ENCODE measurements at regions of chr10 and their contacts with region 1.

Region 1: DNA sequence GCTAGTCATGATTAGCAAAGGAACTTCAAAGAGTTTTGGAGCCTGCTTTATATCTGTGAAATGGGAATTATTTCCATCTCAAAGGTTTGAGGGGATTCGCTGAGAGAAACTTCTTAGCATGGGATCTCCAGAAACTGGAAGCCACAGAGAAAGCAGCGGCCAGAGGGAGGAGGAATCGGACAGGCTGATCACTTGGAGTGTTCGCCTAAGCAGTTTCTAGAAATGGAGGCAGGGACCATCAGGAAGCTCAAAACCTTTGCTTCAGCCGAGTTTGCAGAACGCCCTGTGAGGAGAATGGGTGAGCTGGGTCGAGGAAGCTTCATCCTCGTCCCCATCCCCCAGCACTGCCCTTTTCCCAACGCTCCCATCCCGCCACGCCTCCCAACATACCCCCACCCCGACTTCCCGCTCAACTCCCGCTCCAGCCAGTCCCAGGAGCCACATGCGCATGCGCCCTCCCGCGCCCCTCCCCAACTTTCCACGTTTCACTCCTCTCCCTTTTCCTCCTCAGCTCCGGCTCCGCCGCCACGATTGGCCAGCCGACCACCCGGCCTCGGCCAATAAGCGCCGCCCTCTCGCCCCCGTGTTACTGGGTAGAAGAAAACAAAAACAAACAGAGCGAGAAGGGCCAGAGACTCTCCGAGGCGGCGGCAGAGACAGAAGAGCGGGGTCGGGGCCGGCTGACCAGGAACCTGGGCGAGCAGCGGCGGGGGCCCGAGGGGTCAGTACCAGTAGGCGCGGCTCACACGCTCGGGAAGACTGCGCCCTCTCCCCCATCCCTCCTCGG is at the start of gene PDCD4:
- H3K4me3 Mint-ChIP-seq: peak within 1 kb of the TSS; percentile 86
- H3K27ac Mint-ChIP-seq: peak within 1 kb of the TSS; percentile 99
- H3K4me1 Mint-ChIP-seq: peaks cover 41% of the 10 kb centered on the region
- H3K27me3 Mint-ChIP-seq: no peaks in the 10 kb centered on the region

Region 2: GRCh38 chr10:110462166-110463095 is 409.1 kb before region 1 on chr10:
- intact Hi-C with region 1: no loop called
- H3K4me3 Mint-ChIP-seq: no peak overlapping the region
- H3K27ac Mint-ChIP-seq: no peak overlapping the region
- H3K4me1 Mint-ChIP-seq: peaks cover 27% of the 10 kb centered on the region
- H3K27me3 Mint-ChIP-seq: peaks cover 38% of the 10 kb centered on the region

Region 3: DNA sequence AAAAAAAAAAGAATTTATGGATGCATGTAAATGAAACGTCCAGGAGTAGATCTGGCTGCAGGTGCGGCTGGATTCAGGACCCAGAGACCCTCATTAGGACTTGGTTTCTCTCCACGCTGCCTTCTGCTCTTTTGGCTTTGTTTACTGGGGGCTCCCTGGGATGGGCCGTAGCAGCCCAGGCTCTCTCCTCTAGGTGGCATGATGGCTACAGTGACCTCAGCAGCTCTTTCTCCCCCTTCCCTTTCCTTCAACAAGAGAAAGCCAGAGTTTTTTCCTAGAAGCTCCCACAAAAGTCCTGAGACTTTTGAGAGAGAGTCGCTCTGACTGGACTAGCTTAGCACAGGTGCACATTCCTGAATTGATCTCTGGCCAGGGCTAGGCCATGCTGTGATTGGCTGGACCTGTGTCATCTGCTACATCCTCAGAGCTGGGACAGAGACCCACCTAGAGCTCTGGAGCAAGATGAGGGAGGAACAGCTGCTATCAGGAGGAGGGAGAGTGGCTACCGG is 67.6 kb before region 1 on chr10:
- intact Hi-C with region 1: loop called (anchors 5 kb)
- H3K4me3 Mint-ChIP-seq: no peak overlapping the region
- H3K27ac Mint-ChIP-seq: no peak overlapping the region
- H3K4me1 Mint-ChIP-seq: peaks cover 10% of the 10 kb centered on the region
- H3K27me3 Mint-ChIP-seq: no peaks in the 10 kb centered on the region

Region 4: DNA sequence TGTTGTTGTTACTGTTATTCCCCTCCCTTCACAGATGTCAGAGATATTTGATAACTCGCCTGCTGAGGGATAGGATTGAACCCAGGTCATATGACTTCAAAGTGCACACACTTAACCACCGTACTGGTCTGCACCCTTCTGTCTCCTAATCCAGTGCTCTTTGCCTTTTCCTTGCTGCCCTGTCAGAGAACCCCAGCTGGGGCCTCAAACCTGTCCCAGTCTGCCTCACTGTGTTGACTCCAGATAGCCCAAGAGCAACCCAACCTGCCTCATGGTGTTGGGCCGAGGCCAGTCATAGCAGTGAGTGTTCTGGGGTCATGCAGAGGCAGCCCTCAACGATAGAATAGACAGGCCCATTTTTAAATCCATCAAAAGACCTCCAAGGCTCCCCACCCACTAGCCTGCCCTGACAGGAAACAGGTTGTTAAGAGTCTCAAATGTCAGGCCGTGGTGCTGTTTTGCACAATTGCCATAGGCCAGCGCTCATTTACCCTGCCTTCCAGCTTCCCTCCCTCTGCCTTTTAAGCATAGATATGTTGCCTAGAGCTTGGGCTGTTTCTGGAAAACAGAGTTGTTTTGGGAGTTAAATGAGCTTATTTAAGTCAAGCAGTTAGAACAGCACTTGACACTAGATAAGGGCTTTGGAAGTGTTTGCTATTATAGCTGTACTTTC is 36.7 kb before region 1 on chr10:
- intact Hi-C with region 1: loop called (anchors 5 kb)
- H3K4me3 Mint-ChIP-seq: no peak overlapping the region
- H3K27ac Mint-ChIP-seq: no peak overlapping the region
- H3K4me1 Mint-ChIP-seq: peaks cover 21% of the 10 kb centered on the region
- H3K27me3 Mint-ChIP-seq: no peaks in the 10 kb centered on the region

Region 5: DNA sequence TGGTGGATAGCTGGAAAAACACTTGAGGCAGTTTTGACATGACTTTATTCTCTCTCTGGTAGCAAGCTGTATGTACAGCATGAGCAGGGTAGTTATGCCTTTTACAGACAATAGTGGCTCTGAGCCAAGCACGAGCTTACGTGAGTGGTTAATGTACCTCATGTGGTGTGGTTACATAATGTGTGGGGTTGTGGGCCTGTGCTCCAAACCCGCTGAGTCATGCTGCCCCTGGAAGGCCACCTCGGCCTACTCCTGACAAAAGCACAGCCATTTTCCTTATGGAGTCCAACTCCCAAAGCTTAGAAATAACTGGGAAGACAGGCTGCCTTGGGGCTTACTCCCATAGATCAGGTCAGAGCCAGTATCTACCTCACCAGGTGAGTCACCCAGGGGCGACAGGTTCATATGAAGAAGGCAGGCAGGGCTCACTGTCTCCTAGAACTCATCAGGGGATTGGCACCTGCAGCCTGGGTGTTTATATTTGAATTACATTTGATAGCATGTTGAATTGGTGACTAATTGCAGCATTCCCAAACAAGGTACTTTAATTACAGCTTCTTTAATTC is 609.9 kb after region 1 on chr10:
- intact Hi-C with region 1: no loop called
- H3K4me3 Mint-ChIP-seq: no peak overlapping the region
- H3K27ac Mint-ChIP-seq: no peak overlapping the region
- H3K4me1 Mint-ChIP-seq: no peaks in the 10 kb centered on the region
- H3K27me3 Mint-ChIP-seq: no peaks in the 10 kb centered on the region